Activated T-helper 2 cell treated with anti-CD3 and anti-CD28 coated beads, Interferon-gamma antibody, Interleukin-2, Interleukin-4, amounts not matched to agents 10 μg/mL and 5 μg/mL and 100 μg/mL, durations not matched to agents 14 hours and 24 hours and 36 hours (primary cell): ENCODE measurements at regions of chr10 and their contacts with region 1.

Region 1: DNA sequence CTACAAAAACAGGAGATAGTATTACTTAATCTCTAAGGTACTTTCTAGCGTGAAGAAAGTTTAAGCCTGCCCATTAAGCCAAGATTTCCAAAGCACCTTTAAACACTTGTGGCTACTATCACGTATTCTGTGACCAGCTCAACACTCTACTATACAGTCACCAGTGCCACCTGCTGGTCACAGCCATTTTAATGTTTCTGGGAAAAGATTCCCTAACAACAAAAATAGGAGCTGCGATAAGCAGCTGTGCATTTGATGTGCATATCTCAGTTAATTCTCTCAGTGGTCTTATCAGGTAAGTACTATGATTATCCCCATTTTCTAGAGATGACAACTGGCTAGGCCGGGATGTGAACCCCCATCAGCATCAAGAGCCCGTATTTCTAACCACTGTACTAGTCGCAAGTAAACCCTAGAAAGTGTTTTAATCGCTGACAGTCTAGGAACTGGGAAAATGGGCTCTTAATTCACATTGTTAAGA is 860 bp downstream of the SEC31B start:
- DNase-seq: peak; percentile 47
- H3K4me3 Mint-ChIP-seq: no peak overlapping the region
- H3K27ac Mint-ChIP-seq: no peak overlapping the region
- H3K4me1 Mint-ChIP-seq: peaks cover 41% of the 10 kb centered on the region
- H3K27me3 Mint-ChIP-seq: no peaks in the 10 kb centered on the region

Region 2: DNA sequence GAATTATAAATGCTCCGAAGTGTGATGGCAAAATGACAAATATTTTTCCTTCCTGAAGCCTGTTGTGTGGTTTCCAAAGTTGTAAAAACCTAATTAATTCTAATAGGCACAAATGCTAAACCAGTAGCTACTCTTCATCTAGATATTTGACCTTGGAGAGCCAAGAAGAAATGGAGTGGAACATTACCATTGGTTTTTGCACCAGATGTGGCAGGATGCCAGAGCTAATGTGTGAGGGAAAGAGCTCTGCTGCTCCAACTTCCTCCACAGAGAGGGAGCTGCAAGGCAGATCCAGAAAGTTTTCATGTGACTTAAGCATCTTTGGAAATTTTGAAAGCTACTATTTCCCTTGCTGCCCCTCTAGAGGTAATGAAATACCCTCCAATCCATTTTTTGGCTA is 2006.9 kb before region 1 on chr10:
- intact Hi-C with region 1: no loop called
- DNase-seq: no peak
- H3K4me3 Mint-ChIP-seq: no peak overlapping the region
- H3K27ac Mint-ChIP-seq: no peak overlapping the region
- H3K4me1 Mint-ChIP-seq: no peaks in the 10 kb centered on the region
- H3K27me3 Mint-ChIP-seq: peaks cover 4% of the 10 kb centered on the region

Region 3: DNA sequence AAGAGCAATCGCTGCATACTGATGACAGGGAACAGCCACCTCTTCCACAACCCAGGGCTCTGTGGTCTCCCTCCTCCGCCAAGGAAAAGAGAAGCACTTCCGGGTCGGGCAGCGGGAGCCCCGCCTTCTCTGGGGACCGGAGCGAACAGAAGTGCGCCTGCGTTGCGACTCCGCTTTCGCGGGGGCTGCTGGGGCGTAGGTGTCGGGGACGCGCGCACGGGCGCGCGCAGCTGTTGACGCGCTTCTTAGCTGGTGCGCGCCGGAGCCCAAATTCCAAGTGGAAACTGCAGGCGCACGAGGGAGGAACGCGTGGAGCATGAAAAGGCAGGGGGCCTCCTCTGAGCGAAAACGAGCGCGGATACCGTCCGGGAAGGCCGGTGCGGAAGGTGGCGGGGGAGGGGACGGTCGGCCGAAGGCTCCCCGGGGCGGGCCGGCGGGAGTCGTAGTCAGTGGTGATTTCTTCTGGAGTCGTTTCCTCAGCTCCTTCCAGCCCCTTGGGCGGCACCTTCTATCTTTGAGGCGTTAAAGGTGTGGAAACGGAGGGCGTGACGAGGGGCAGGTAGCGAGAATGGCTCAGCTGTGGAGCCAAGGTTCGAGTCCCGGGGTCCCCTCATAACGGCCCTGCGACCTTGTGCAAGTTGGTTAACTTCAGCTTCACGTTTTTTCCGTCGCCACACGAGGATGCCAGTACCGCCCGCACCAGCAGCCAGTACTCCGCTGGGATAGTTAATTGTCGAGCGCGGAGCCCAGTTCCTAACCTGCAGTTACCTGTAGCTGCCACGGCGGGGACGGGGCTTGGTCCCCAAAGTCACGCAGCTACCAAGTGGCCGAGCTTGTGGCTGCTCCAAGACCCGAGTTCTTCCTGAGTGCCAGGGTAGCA is 786.5 kb before region 1 on chr10 and contains the starts of genes COX15 and CUTC:
- intact Hi-C with region 1: loop called (anchors 10 kb)
- DNase-seq: peak; percentile 94
- H3K4me3 Mint-ChIP-seq: peak within 1 kb of the TSS; percentile 99
- H3K27ac Mint-ChIP-seq: peak within 1 kb of the TSS; percentile 99
- H3K4me1 Mint-ChIP-seq: peaks cover 24% of the 10 kb centered on the region
- H3K27me3 Mint-ChIP-seq: no peaks in the 10 kb centered on the region
- total RNA-seq, gene COX15: 33.9 and 35.2 TPM in 2 replicates
- total RNA-seq, gene CUTC: 34.4 and 35.5 TPM in 2 replicates

Region 4: GRCh38 chr10:100327007-100327717 is 191.6 kb before region 1 on chr10:
- intact Hi-C with region 1: no loop called
- DNase-seq: peak; percentile 42
- H3K4me3 Mint-ChIP-seq: peak overlapping the region; percentile 13
- H3K27ac Mint-ChIP-seq: peak overlapping the region; percentile 84
- H3K4me1 Mint-ChIP-seq: peaks cover 16% of the 10 kb centered on the region
- H3K27me3 Mint-ChIP-seq: peaks cover 17% of the 10 kb centered on the region

Region 5: DNA sequence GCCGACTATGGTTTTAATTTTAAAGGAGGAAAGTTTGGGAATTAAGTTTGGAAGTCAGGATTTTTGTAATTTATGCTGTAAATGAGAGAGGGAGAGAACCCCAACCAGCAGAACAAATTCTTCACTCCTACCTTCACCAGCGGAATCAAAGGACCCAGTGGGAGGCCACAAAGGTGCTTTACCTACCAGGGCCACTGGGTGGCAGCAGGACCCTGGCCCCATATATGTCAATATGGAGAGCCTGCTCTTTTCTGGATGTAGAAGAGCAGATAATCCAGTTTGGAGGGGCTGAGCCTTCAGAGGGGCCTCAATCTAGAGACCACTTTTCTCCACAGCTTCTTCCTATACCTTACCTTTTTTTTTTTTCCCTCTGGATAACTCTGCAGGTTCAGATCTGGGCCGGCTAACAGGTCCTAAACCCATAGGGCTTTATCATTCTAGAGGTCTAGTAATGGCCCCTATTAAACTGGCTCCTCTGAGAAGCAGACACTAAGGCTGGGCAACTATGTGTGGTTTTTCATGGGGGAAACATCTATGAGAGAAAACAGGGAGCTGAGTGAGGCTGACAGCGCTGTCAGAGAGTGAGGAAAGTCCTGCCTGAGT is 180.3 kb before region 1 on chr10:
- intact Hi-C with region 1: loop called (anchors 1 kb)
- DNase-seq: peak; percentile 71
- H3K4me3 Mint-ChIP-seq: no peak overlapping the region
- H3K27ac Mint-ChIP-seq: no peak overlapping the region
- H3K4me1 Mint-ChIP-seq: peaks cover 17% of the 10 kb centered on the region
- H3K27me3 Mint-ChIP-seq: peaks cover 9% of the 10 kb centered on the region

Region 6: DNA sequence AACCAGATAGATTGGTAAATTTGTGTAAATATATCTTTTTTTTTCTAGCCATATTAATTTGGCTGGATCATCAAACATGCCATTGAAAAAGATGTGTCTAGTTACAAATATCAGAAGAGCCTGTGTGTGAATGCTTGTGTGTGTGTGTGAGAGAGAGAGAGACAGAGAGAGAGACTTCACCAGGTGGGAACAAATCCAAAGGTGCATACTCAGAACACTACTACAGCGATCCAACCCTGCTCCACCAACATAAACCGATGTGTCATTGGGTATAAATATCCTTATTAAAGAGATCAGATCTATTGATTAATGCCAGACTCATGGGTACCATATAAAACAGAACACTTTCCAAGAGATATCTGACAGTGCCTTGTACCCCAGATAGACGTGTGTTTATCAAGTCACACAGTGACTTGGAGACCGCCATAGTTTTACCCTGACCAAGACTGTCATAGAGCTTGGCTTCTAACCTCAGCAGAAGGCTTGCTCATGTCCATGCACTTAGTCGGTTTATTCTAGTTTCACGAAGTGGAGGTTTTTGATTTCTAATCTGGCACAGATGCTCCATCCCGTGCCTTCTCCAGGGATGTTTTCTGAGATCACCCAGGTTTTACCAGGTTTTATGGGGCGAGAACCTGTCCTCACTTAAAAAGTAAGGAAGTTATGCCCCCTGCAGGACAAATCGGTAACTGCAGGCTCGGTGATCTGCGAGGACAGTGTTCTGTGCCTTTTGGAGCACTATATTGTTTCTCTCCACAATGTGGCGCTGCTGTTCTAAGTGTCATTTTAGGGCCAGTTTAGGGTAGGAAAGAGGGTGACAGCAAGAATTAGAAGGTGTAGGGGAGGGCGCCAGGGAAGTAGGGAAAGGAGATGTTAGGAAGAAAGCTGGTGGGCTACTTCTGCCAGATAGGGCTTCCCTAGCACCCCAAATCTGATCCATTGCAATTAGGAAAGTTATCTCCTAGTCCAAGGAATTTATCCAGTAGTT is 85.3 kb before region 1 on chr10:
- intact Hi-C with region 1: loop called (anchors 1 kb)
- DNase-seq: peak; percentile 90
- H3K4me3 Mint-ChIP-seq: no peak overlapping the region
- H3K27ac Mint-ChIP-seq: no peak overlapping the region
- H3K4me1 Mint-ChIP-seq: peaks cover 16% of the 10 kb centered on the region
- H3K27me3 Mint-ChIP-seq: no peaks in the 10 kb centered on the region

Region 7: GRCh38 chr10:100481462-100482081 is 37.2 kb before region 1 on chr10:
- intact Hi-C with region 1: loop called (anchors 1 kb)
- DNase-seq: peak; percentile 88
- H3K4me3 Mint-ChIP-seq: peak overlapping the region; percentile 78
- H3K27ac Mint-ChIP-seq: no peak overlapping the region
- H3K4me1 Mint-ChIP-seq: peaks cover 26% of the 10 kb centered on the region
- H3K27me3 Mint-ChIP-seq: peaks cover 9% of the 10 kb centered on the region

Region 8: GRCh38 chr10:100529475-100530298 is 10.9 kb after region 1 on chr10 and contains the start of gene NDUFB8:
- intact Hi-C with region 1: loop called (anchors 1 kb)
- DNase-seq: peak; percentile 83
- H3K4me3 Mint-ChIP-seq: peak within 1 kb of the TSS; percentile 89
- H3K27ac Mint-ChIP-seq: peak within 1 kb of the TSS; percentile 95
- H3K4me1 Mint-ChIP-seq: peaks cover 22% of the 10 kb centered on the region
- H3K27me3 Mint-ChIP-seq: no peaks in the 10 kb centered on the region
- total RNA-seq, gene NDUFB8: 278 and 283 TPM in 2 replicates